Sigmoid colon (tissue), 7 donors: ENCODE measurements at regions of chr9 and their contacts with region 1.

Region 1: DNA sequence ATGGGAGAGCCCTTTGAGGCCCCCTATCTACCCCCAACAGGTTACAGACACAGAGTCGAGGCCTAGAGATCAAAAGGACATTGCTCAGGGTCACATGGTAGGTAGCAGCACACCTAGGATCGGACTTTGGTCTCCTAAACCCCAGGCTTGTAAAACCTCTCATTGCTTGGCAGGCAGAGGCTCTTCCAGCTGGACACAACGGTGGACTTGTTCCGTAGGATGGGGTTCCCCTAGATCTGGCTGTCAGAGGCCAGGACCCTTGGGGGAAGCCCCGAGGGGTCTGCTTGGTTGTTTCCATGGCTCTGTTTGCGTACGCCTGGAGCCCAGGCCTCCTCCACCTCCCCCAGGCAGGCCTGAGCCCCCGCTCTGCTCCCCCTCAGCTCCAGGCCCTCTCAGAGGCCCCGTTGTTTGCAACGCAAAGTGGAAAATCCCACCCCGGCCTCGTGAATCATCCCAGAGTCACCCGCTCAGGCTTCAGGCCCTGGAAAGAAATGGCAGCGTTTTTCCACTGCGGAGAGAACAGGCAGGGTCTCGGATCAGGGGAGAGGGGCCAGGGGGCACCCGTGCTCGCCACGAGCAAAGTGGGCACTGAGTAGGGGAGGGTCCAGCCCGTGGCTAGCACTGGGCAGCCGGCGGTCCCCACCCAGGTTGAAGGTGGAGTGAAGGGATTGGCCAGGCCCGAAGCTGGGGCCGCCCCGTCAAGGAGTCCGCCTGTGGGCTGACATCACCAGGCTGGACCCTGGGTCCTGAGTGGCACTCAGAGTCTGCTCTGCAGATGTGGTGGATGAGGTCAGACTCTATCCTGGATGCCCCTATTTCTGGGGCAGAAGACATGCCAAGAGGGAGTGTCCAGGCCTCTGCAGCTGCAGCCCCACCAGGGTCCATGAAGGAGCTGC is 19.8 kb downstream of the COL27A1 start:
- DNase-seq: peak; percentile 80
- H3K4me3 ChIP-seq: no peak overlapping the region
- H3K27ac ChIP-seq: peak overlapping the region; percentile 49 to 77 (median 70)
- H3K4me1 ChIP-seq: peaks cover 0 to 77% (median 70%) of the 10 kb centered on the region in 4 donors
- H3K27me3 ChIP-seq: no peaks in the 10 kb centered on the region
- CTCF ChIP-seq: no peak
- EP300 ChIP-seq: no peak
- POLR2A ChIP-seq: no peak

Region 2: GRCh38 chr9:113609562-113610318 is 565.4 kb before region 1 on chr9:
- intact Hi-C with region 1: no loop called
- DNase-seq: peak; percentile 85
- H3K4me3 ChIP-seq: no peak overlapping the region
- H3K27ac ChIP-seq: peak overlapping the region; percentile 31 to 58 (median 48)
- H3K4me1 ChIP-seq: peaks cover 0 to 20% (median 13%) of the 10 kb centered on the region in 4 donors
- H3K27me3 ChIP-seq: no peaks in the 10 kb centered on the region
- CTCF ChIP-seq: no peak
- EP300 ChIP-seq: no peak
- POLR2A ChIP-seq: no peak

Region 3: GRCh38 chr9:114216081-114216480 is 41.0 kb after region 1 on chr9:
- intact Hi-C with region 1: loop called (anchors 5 kb)
- DNase-seq: no peak
- H3K4me3 ChIP-seq: no peak overlapping the region
- H3K27ac ChIP-seq: peak overlapping the region in 2 of 4 donors; percentile 20 to 52
- H3K4me1 ChIP-seq: peaks cover 0 to 34% (median 25%) of the 10 kb centered on the region in 4 donors
- H3K27me3 ChIP-seq: no peaks in the 10 kb centered on the region
- CTCF ChIP-seq: no peak
- EP300 ChIP-seq: no peak
- POLR2A ChIP-seq: no peak

Region 4: DNA sequence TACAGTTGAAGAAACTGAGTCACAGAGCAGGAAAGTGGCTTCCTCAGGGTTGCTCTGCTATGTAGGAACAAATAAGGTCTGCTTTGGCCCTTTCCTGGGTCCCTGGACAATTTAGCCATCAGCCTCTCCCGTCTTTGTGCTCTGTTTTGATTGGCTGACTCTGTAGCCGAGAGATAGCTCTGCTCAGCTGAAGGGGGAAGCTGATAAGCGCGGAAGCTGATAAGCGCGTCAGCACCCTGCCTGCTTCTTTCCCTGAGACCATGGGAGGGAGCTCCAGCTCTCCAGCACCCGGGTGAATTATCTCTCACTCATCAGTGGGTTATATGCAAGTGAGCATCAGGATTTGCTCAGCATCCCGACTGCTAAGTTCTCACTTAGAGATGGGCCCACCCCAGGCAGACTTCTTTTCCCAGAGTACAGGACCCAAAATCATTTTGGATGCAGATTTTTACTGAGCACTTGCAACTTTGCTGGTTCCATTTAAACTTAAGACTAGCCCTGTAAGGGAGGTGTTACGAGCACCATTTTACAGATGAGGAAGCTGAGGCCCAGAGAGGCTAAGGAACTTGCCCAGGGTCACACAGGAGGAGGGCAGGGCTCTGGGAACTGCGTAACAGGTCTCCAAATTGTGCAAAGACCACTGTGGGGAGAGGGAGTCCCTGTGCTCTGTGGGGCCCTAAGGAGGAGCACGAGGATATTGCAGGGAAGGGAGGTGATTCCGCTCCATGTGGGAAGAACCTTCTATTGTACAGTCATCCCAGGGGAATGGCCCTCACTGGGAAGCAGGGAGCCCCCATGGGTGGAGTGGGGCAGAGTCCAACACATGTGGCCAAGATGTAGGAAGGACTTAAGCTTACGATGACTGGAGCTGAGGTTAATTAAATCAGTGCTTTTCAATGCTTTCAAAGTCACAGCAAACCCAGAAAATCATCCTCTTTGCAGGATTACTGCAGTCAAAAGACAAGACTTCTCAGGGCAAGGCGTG is 64.1 kb after region 1 on chr9:
- intact Hi-C with region 1: no loop called
- DNase-seq: no peak
- H3K4me3 ChIP-seq: no peak overlapping the region
- H3K27ac ChIP-seq: no peak overlapping the region
- H3K4me1 ChIP-seq: no peaks in the 10 kb centered on the region
- H3K27me3 ChIP-seq: no peaks in the 10 kb centered on the region
- CTCF ChIP-seq: no peak
- EP300 ChIP-seq: no peak
- POLR2A ChIP-seq: no peak

Region 5: DNA sequence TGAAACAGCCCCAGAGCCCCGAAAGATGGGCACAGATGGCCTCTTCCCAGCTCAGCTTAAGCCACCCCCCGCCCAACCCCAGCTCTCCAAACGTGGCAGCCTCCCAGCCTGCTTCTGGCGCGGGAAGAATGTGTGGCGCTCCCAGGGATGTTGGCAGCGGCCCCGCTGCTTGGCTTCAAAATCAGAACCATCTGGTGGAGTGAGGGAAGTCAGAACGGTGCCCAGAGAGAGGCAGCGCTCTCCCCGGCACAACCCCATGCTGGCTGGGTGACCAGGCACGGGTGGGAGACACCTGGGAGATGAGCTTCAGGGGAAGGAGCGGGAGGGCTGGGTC is 75.1 kb after region 1 on chr9:
- intact Hi-C with region 1: loop called (anchors 5 kb)
- DNase-seq: peak; percentile 93
- H3K4me3 ChIP-seq: peak overlapping the region in 3 of 4 donors; percentile 15 to 24 (median 18)
- H3K27ac ChIP-seq: peak overlapping the region; percentile 65 to 79 (median 74)
- H3K4me1 ChIP-seq: peaks cover 0 to 35% (median 32%) of the 10 kb centered on the region in 4 donors
- H3K27me3 ChIP-seq: no peaks in the 10 kb centered on the region
- CTCF ChIP-seq: no peak
- EP300 ChIP-seq: no peak
- POLR2A ChIP-seq: no peak

Region 6: DNA sequence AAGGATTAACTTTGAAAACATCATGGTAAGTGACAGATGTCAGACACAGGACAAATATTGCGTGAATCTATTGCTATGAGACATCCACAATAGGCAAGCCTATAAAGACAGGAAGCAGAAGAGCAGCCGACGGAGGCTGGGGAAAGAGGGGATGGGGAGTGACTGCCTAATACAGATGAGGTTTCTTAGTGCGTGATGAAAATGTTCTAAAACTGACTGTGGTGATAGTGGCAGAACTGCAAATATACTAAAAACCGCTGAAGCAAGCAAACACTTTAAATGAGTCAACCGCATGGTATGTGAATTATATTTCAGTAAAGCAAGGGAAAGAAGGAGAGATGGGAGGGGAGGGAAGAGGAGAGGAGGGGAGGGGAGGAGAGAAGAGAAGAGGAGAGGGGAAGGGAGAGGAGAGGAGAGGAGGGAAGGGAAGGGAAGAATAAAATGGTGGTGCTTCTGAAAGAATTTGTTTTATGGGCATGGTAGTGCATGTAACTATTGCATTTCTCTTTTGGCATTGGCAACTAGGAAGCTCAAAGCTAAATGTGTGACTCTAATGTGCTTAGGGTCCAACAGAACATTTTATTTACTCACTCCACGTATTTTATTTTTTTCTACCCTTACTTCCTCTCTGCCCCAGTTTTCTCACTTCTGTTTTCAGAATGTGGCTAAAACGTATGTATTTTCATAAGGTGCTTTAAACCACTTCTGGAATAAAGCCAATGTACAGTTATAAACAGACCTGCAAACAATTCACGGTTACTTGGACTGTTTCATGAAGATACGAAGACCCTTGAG is 191.4 kb after region 1 on chr9:
- intact Hi-C with region 1: no loop called
- DNase-seq: no peak
- H3K4me3 ChIP-seq: no peak overlapping the region
- H3K27ac ChIP-seq: peak overlapping the region in 3 of 4 donors; percentile 9 to 58 (median 25)
- H3K4me1 ChIP-seq: peaks cover 0 to 8% (median 0%) of the 10 kb centered on the region in 4 donors
- H3K27me3 ChIP-seq: no peaks in the 10 kb centered on the region
- CTCF ChIP-seq: no peak
- EP300 ChIP-seq: no peak
- POLR2A ChIP-seq: no peak